ENCODE measurements at regions of chr10 and their contacts with region 1.

Region 1: GRCh38 chr10:75019370-75019769 is 92.1 kb upstream of the SAMD8 start:
- DNase-seq: no peak
- H3K4me3 Mint-ChIP-seq: no peak overlapping the region
- H3K27ac Mint-ChIP-seq: no peak overlapping the region
- H3K4me1 Mint-ChIP-seq: peaks cover 12% of the 10 kb centered on the region
- H3K27me3 Mint-ChIP-seq: no peaks in the 10 kb centered on the region

Region 2: GRCh38 chr10:74262856-74263255 is 756.5 kb before region 1 on chr10:
- CTCF ChIA-PET with region 1: interaction called, 5 read pairs
- intact Hi-C with region 1: loop called (anchors 1 kb)
- DNase-seq: no peak
- H3K4me3 Mint-ChIP-seq: no peak overlapping the region
- H3K27ac Mint-ChIP-seq: no peak overlapping the region
- H3K4me1 Mint-ChIP-seq: peaks cover 26% of the 10 kb centered on the region
- H3K27me3 Mint-ChIP-seq: no peaks in the 10 kb centered on the region

Region 3: GRCh38 chr10:74738985-74739567 is 280.3 kb before region 1 on chr10:
- CTCF ChIA-PET with region 1: interaction called, 7 read pairs
- intact Hi-C with region 1: loop called (anchors 1 kb)
- DNase-seq: peak; percentile 46
- H3K4me3 Mint-ChIP-seq: no peak overlapping the region
- H3K27ac Mint-ChIP-seq: no peak overlapping the region
- H3K4me1 Mint-ChIP-seq: peaks cover 13% of the 10 kb centered on the region
- H3K27me3 Mint-ChIP-seq: no peaks in the 10 kb centered on the region

Region 4: DNA sequence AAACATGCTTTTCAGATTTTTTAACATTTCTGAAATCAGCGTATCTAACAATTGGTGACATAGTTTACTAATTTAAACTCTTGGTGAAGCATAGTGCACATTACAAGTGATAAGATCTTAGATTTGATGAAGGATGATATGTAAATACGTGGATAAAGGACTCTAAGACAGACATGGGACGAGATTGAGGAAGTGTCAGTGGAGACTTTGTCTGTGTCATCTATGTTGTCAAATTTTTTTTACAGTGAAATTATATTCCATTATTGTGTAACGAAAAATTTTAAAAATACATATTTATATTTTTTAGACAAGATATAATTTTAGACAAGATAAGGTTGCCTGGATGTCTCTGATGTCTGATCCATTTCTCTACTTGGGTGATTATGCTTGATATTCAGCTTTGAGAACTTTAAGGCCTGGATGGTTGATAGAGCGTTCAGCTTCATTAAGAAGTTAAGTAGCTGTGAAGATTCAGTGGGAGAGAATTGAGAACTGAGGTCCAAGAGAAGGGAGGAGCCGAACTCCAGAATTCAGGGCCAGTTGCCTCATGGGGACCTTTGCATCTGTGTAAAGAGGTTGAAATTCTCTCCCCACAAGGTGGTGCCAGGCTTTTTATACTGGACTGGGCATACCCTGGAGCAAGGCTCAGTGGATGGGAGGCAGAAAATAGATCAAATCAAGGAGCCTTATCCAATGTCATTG is 130.3 kb before region 1 on chr10:
- CTCF ChIA-PET with region 1: interaction called, 6 read pairs
- intact Hi-C with region 1: loop called (anchors 1 kb)
- DNase-seq: peak; percentile 38
- H3K4me3 Mint-ChIP-seq: no peak overlapping the region
- H3K27ac Mint-ChIP-seq: no peak overlapping the region
- H3K4me1 Mint-ChIP-seq: peaks cover 32% of the 10 kb centered on the region
- H3K27me3 Mint-ChIP-seq: no peaks in the 10 kb centered on the region

Measured in activated naive CD4-positive, alpha-beta T cell treated with anti-CD3 and anti-CD28 coated beads for 36 hours (primary cell).